ENCODE measurements at regions of chr2 and their contacts with region 1.

Region 1: GRCh38 chr2:70301344-70302194 is at the start of gene FAM136A:
- DNase-seq: peak; percentile 85 to 95 (median 88)
- ATAC-seq: peak; percentile 77 to 96 (median 94)
- H3K4me3 ChIP-seq: peak within 1 kb of the TSS; percentile 67 to 99 (median 88)
- H3K27ac ChIP-seq: peak within 1 kb of the TSS in 11 of 12 donors; percentile 72 to 93 (median 86)
- H3K4me1 ChIP-seq: peaks cover 0 to 16% (median 4%) of the 10 kb centered on the region in 12 donors
- H3K27me3 ChIP-seq: no peaks in the 10 kb centered on the region
- CTCF ChIP-seq: peak; percentile 89 to 99 (median 96)
- POLR2A ChIP-seq: peak in 1 of 2 donors; percentile 56
- total RNA-seq, gene FAM136A: 17.8 to 25.9 (median 23.9) TPM

Region 2: GRCh38 chr2:69914170-69914960 is 387.2 kb before region 1 on chr2:
- intact Hi-C with region 1: loop called (anchors 2 to 10 kb)
- DNase-seq: peak; percentile 98 to 100 (median 100)
- ATAC-seq: peak; percentile 95 to 98 (median 97)
- H3K4me3 ChIP-seq: peak overlapping the region; percentile 49 to 88 (median 80)
- H3K27ac ChIP-seq: peak overlapping the region; percentile 71 to 99 (median 96)
- H3K4me1 ChIP-seq: peaks cover 0 to 56% (median 14%) of the 10 kb centered on the region in 12 donors
- H3K27me3 ChIP-seq: no peaks in the 10 kb centered on the region
- CTCF ChIP-seq: peak in 7 of 12 donors; percentile 12 to 51 (median 40)
- POLR2A ChIP-seq: peak; percentile 62 to 75

Region 3: GRCh38 chr2:70142590-70143313 is 158.8 kb before region 1 on chr2:
- intact Hi-C with region 1: loop called in 1 of 10 experiments (anchors 5 kb)
- DNase-seq: peak; percentile 99 to 100 (median 99)
- ATAC-seq: peak; percentile 90 to 91 (median 90)
- H3K4me3 ChIP-seq: peak overlapping the region in 11 of 12 donors; percentile 26 to 92 (median 73)
- H3K27ac ChIP-seq: peak overlapping the region; percentile 94 to 100 (median 98)
- H3K4me1 ChIP-seq: peaks cover 2 to 35% (median 20%) of the 10 kb centered on the region in 12 donors
- H3K27me3 ChIP-seq: no peaks in the 10 kb centered on the region
- CTCF ChIP-seq: peak; percentile 91 to 99 (median 97)
- POLR2A ChIP-seq: peak in 1 of 2 donors; percentile 47

Region 4: GRCh38 chr2:70258532-70258874 is 43.1 kb before region 1 on chr2:
- intact Hi-C with region 1: loop called in 1 of 10 experiments (anchors 5 kb)
- DNase-seq: peak; percentile 83 to 91 (median 85)
- ATAC-seq: peak; percentile 48 to 74 (median 69)
- H3K4me3 ChIP-seq: peak overlapping the region; percentile 53 to 97 (median 80)
- H3K27ac ChIP-seq: peak overlapping the region; percentile 67 to 95 (median 88)
- H3K4me1 ChIP-seq: peaks cover 0 to 40% (median 35%) of the 10 kb centered on the region in 12 donors
- H3K27me3 ChIP-seq: no peaks in the 10 kb centered on the region
- CTCF ChIP-seq: no peak
- POLR2A ChIP-seq: no peak

Region 5: DNA sequence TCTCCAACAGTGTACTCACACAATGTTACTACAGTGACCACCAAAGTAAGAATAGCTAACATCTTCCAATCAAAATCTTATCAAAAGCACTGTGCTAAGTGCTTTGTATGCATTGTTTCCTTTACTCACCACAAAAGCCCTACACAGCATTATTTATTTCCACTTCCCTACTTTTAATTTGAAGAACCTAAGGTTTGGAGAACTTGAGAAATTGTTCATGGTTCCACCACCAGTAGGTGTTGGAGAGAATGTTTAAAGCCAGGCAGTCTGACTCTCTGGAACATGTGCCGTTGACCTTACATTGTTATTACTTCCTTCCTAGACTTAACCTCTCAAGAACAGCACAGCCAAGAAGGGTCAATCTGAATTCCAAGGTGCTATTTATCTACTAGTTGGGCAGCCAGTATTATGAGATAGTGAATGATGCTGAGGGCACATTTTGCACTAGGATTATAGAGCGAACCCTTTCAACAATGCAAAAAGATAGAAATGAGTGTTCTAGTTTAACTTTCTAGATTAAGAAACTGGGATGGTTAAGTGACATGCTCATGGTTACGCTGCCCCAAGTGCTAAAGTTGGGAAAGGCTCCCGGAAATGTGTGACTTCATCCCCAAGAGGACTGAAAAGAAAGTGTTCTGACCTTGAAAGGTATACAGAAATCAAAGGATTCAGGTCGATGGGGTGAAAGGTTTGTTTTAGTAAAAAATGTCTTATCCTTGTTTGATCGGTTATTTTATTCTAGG is 55.5 kb after region 1 on chr2:
- intact Hi-C with region 1: no loop called
- DNase-seq: no peak
- ATAC-seq: peak in 1 of 4 donors; percentile 52
- H3K4me3 ChIP-seq: no peak overlapping the region
- H3K27ac ChIP-seq: peak overlapping the region in 1 of 12 donors; percentile 13
- H3K4me1 ChIP-seq: peaks cover 0 to 12% (median 0%) of the 10 kb centered on the region in 12 donors
- H3K27me3 ChIP-seq: no peaks in the 10 kb centered on the region
- CTCF ChIP-seq: no peak
- POLR2A ChIP-seq: no peak

Region 6: DNA sequence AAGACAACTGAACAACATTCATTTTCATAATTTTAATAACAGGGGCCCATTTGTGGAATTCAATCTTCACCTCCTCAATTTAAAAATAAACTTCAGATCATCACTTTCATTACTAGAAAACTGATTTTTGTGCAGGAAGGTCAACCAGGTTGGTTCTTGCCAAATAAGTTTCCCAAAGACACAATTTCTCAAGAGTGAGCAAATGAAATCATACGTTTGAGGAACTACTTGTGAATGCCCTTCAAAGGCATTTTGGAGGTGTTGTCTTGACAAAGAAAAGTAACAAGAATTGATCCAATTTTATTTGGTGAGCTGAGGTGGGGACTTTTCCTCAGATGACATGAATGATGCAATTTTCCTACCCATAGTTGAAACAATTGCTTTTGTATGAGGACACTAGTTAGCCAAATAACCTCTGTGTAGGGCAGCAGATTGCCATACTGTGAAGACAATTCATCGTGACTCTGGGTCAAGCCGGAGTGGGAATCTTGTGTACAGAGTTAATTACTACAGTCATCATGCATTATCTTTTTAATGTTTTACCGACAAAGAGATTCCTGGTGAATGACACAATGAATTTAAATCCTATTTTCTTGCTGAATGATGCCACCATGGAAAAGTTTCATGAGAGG is 130.3 kb after region 1 on chr2:
- intact Hi-C with region 1: no loop called
- DNase-seq: no peak
- ATAC-seq: no peak
- H3K4me3 ChIP-seq: no peak overlapping the region
- H3K27ac ChIP-seq: no peak overlapping the region
- H3K4me1 ChIP-seq: no peaks in the 10 kb centered on the region
- H3K27me3 ChIP-seq: no peaks in the 10 kb centered on the region
- CTCF ChIP-seq: no peak
- POLR2A ChIP-seq: no peak

Region 7: GRCh38 chr2:70647873-70648481 is 346.4 kb after region 1 on chr2:
- intact Hi-C with region 1: loop called in 3 of 10 experiments (anchors 1 to 2 kb)
- DNase-seq: peak in 3 of 5 donors; percentile 31 to 48 (median 47)
- ATAC-seq: peak in 3 of 4 donors; percentile 61 to 67 (median 62)
- H3K4me3 ChIP-seq: no peak overlapping the region
- H3K27ac ChIP-seq: no peak overlapping the region
- H3K4me1 ChIP-seq: no peaks in the 10 kb centered on the region
- H3K27me3 ChIP-seq: peaks cover 0 to 28% (median 0%) of the 10 kb centered on the region in 9 donors
- CTCF ChIP-seq: peak; percentile 75 to 99 (median 88)
- POLR2A ChIP-seq: no peak

Measured in heart left ventricle (tissue), 16 donors.